Dorsolateral prefrontal cortex (tissue), 120 donors: ENCODE measurements at regions of chr14 and their contacts with region 1.

Region 1: GRCh38 chr14:99729991-99730868 is 46.1 kb downstream of the CYP46A1 start:
- DNase-seq: peak; percentile 51 to 82 (median 70)
- H3K4me3 ChIP-seq: peak overlapping the region; percentile 34 to 84 (median 67)
- H3K27ac ChIP-seq: peak overlapping the region in 20 of 59 donors; percentile 1 to 88 (median 42)
- H3K27me3 ChIP-seq: no peaks in the 10 kb centered on the region
- CTCF ChIP-seq: peak; percentile 54 to 99 (median 90)

Region 2: GRCh38 chr14:99946652-99947489 is 216.6 kb after region 1 on chr14:
- intact Hi-C with region 1: loop called in 1 of 2 experiments (anchors 5 kb)
- DNase-seq: peak in 1 of 10 donors; percentile 15
- H3K4me3 ChIP-seq: peak overlapping the region in 45 of 59 donors; percentile 1 to 60 (median 29)
- H3K27ac ChIP-seq: peak overlapping the region in 24 of 59 donors; percentile 0 to 64 (median 47)
- H3K27me3 ChIP-seq: peaks cover 0 to 5% (median 0%) of the 10 kb centered on the region in 45 donors
- CTCF ChIP-seq: peak; percentile 59 to 94 (median 85)